ENCODE measurements at regions of chr10 and their contacts with region 1.

Region 1: DNA sequence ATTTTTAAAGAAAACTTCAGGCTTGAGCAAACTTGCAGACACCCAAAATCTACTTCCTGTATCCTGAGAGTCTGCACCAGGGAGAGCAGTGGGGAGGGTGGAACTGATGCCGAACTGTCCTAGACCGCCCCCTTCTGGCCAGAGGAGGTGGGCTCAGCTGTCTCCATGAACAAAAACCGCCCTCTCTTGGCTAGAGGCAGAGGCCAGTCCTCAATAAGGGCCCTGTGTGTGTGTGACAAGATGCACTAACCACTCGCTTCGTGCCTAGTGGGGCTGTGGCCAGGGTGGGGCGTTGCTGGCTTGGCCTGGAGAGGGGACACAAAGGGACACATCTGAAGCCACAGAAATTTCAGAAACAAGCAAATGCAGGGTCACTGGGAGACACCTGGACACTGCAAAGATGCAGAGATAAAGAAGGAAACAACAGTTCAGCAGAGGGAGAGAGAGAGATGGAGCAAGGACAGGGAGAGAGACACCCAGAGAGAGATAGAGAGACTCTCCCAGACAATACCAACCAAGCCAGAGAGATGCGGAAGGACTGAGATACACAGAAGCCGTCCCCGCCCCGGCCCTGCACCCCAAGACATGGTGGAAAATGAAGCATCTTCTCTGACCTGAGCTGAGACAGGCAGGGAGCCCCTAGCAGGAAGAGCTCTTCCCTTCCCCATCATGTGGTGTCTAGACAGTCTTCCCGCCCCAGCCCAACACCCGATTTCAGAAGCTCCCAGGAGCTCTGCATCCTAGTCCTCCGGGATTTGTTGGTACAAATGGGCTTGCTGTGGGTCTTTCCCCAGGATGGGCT is 22.7 kb upstream of the FXYD4 start:
- DNase-seq: peak; percentile 73 to 93 (median 87)
- ATAC-seq: peak; percentile 100
- H3K4me3 ChIP-seq: no peak overlapping the region
- H3K4me3 Mint-ChIP-seq: no peak overlapping the region
- H3K27ac ChIP-seq: no peak overlapping the region
- H3K27ac Mint-ChIP-seq: no peak overlapping the region
- H3K4me1 ChIP-seq: peaks cover 13% of the 10 kb centered on the region
- H3K4me1 Mint-ChIP-seq: peaks cover 12% of the 10 kb centered on the region
- H3K27me3 ChIP-seq: no peaks in the 10 kb centered on the region
- H3K27me3 Mint-ChIP-seq: peaks cover 15% of the 10 kb centered on the region
- CTCF ChIP-seq: peak; percentile 91

Region 2: GRCh38 chr10:42866115-42866995 is 482.4 kb before region 1 on chr10:
- CTCF ChIA-PET with region 1: no interaction called
- POLR2A ChIA-PET with region 1: no interaction called
- intact Hi-C with region 1: loop called in 1 of 2 experiments (anchors 5 kb)
- DNase-seq: peak in 8 of 9 experiments; percentile 15 to 67 (median 44)
- ATAC-seq: peak; percentile 40
- H3K4me3 ChIP-seq: peak overlapping the region in 1 of 2 experiments; percentile 15
- H3K4me3 Mint-ChIP-seq: no peak overlapping the region
- H3K27ac ChIP-seq: no peak overlapping the region
- H3K27ac Mint-ChIP-seq: no peak overlapping the region
- H3K4me1 ChIP-seq: no peaks in the 10 kb centered on the region
- H3K4me1 Mint-ChIP-seq: peaks cover 6% of the 10 kb centered on the region
- H3K27me3 ChIP-seq: peaks cover 0 to 2% of the 10 kb centered on the region in 2 experiments
- H3K27me3 Mint-ChIP-seq: peaks cover 32% of the 10 kb centered on the region
- CTCF ChIP-seq: peak; percentile 29

Region 3: GRCh38 chr10:42975558-42976340 is 373.0 kb before region 1 on chr10:
- CTCF ChIA-PET with region 1: no interaction called
- POLR2A ChIA-PET with region 1: no interaction called
- intact Hi-C with region 1: no loop called
- DNase-seq: peak in 2 of 9 experiments; percentile 2 to 40
- ATAC-seq: no peak
- H3K4me3 ChIP-seq: no peak overlapping the region
- H3K4me3 Mint-ChIP-seq: no peak overlapping the region
- H3K27ac ChIP-seq: no peak overlapping the region
- H3K27ac Mint-ChIP-seq: no peak overlapping the region
- H3K4me1 ChIP-seq: no peaks in the 10 kb centered on the region
- H3K4me1 Mint-ChIP-seq: no peaks in the 10 kb centered on the region
- H3K27me3 ChIP-seq: no peaks in the 10 kb centered on the region
- H3K27me3 Mint-ChIP-seq: no peaks in the 10 kb centered on the region
- CTCF ChIP-seq: no peak

Region 4: GRCh38 chr10:43204943-43205671 is 143.6 kb before region 1 on chr10:
- CTCF ChIA-PET with region 1: interaction called, 45 read pairs
- POLR2A ChIA-PET with region 1: no interaction called
- intact Hi-C with region 1: loop called (anchors 1 to 2 kb)
- DNase-seq: peak in 8 of 9 experiments; percentile 33 to 77 (median 58)
- ATAC-seq: peak; percentile 55
- H3K4me3 ChIP-seq: no peak overlapping the region
- H3K4me3 Mint-ChIP-seq: no peak overlapping the region
- H3K27ac ChIP-seq: peak overlapping the region in 1 of 2 experiments; percentile 30
- H3K27ac Mint-ChIP-seq: no peak overlapping the region
- H3K4me1 ChIP-seq: peaks cover 3% of the 10 kb centered on the region
- H3K4me1 Mint-ChIP-seq: peaks cover 6% of the 10 kb centered on the region
- H3K27me3 ChIP-seq: no peaks in the 10 kb centered on the region
- H3K27me3 Mint-ChIP-seq: no peaks in the 10 kb centered on the region
- CTCF ChIP-seq: peak; percentile 70

Region 5: GRCh38 chr10:43265799-43266721 is 82.7 kb before region 1 on chr10:
- CTCF ChIA-PET with region 1: interaction called, 27 read pairs
- POLR2A ChIA-PET with region 1: interaction called, 3 read pairs
- intact Hi-C with region 1: loop called (anchors 1 to 2 kb)
- DNase-seq: peak in 8 of 9 experiments; percentile 27 to 71 (median 49)
- ATAC-seq: peak; percentile 78
- H3K4me3 ChIP-seq: peak overlapping the region; percentile 41
- H3K4me3 Mint-ChIP-seq: peak overlapping the region; percentile 81
- H3K27ac ChIP-seq: no peak overlapping the region
- H3K27ac Mint-ChIP-seq: no peak overlapping the region
- H3K4me1 ChIP-seq: peaks cover 6% of the 10 kb centered on the region
- H3K4me1 Mint-ChIP-seq: peaks cover 6% of the 10 kb centered on the region
- H3K27me3 ChIP-seq: peaks cover 14 to 25% of the 10 kb centered on the region in 2 experiments
- H3K27me3 Mint-ChIP-seq: peaks cover 50% of the 10 kb centered on the region
- CTCF ChIP-seq: no peak

Region 6: GRCh38 chr10:43292755-43293676 is 55.7 kb before region 1 on chr10:
- CTCF ChIA-PET with region 1: interaction called, 98 read pairs
- POLR2A ChIA-PET with region 1: interaction called, 4 read pairs
- intact Hi-C with region 1: loop called (anchors 1 kb)
- DNase-seq: peak in 7 of 9 experiments; percentile 35 to 72 (median 58)
- ATAC-seq: peak; percentile 53
- H3K4me3 ChIP-seq: no peak overlapping the region
- H3K4me3 Mint-ChIP-seq: peak overlapping the region; percentile 49
- H3K27ac ChIP-seq: no peak overlapping the region
- H3K27ac Mint-ChIP-seq: peak overlapping the region; percentile 71
- H3K4me1 ChIP-seq: peaks cover 32% of the 10 kb centered on the region
- H3K4me1 Mint-ChIP-seq: peaks cover 52% of the 10 kb centered on the region
- H3K27me3 ChIP-seq: peaks cover 0 to 3% of the 10 kb centered on the region in 2 experiments
- H3K27me3 Mint-ChIP-seq: no peaks in the 10 kb centered on the region
- CTCF ChIP-seq: peak; percentile 63

Region 7: GRCh38 chr10:43361986-43362839 is 13.5 kb after region 1 on chr10:
- CTCF ChIA-PET with region 1: interaction called, 25 read pairs
- POLR2A ChIA-PET with region 1: no interaction called
- intact Hi-C with region 1: no loop called
- DNase-seq: peak; percentile 94 to 99 (median 97)
- ATAC-seq: peak; percentile 98
- H3K4me3 ChIP-seq: peak overlapping the region; percentile 80
- H3K4me3 Mint-ChIP-seq: peak overlapping the region; percentile 93
- H3K27ac ChIP-seq: peak overlapping the region; percentile 69 to 93
- H3K27ac Mint-ChIP-seq: peak overlapping the region; percentile 98
- H3K4me1 ChIP-seq: peaks cover 15% of the 10 kb centered on the region
- H3K4me1 Mint-ChIP-seq: peaks cover 26% of the 10 kb centered on the region
- H3K27me3 ChIP-seq: no peaks in the 10 kb centered on the region
- H3K27me3 Mint-ChIP-seq: no peaks in the 10 kb centered on the region
- CTCF ChIP-seq: peak; percentile 24

Region 8: GRCh38 chr10:44706745-44707144 is 1358.0 kb after region 1 on chr10:
- CTCF ChIA-PET with region 1: no interaction called
- POLR2A ChIA-PET with region 1: no interaction called
- intact Hi-C with region 1: no loop called
- DNase-seq: no peak
- ATAC-seq: no peak
- H3K4me3 ChIP-seq: no peak overlapping the region
- H3K4me3 Mint-ChIP-seq: no peak overlapping the region
- H3K27ac ChIP-seq: no peak overlapping the region
- H3K27ac Mint-ChIP-seq: no peak overlapping the region
- H3K4me1 ChIP-seq: no peaks in the 10 kb centered on the region
- H3K4me1 Mint-ChIP-seq: no peaks in the 10 kb centered on the region
- H3K27me3 ChIP-seq: no peaks in the 10 kb centered on the region
- H3K27me3 Mint-ChIP-seq: no peaks in the 10 kb centered on the region
- CTCF ChIP-seq: no peak

Measured in CD8-positive, alpha-beta T cell (primary cell).